Activated CD4-positive, alpha-beta memory T cell treated with anti-CD3 and anti-CD28 coated beads for 36 hours (primary cell): ENCODE measurements at regions of chr11 and their contacts with region 1.

Region 1: GRCh38 chr11:33716236-33716635 is 15.6 kb upstream of the C11orf91 start:
- DNase-seq: no peak
- H3K4me3 Mint-ChIP-seq: no peak overlapping the region
- H3K27ac Mint-ChIP-seq: no peak overlapping the region
- H3K4me1 Mint-ChIP-seq: peaks cover 2% of the 10 kb centered on the region
- H3K27me3 Mint-ChIP-seq: no peaks in the 10 kb centered on the region

Region 2: GRCh38 chr11:33303541-33303940 is 412.7 kb before region 1 on chr11:
- CTCF ChIA-PET with region 1: no interaction called
- POLR2A ChIA-PET with region 1: no interaction called
- intact Hi-C with region 1: no loop called
- DNase-seq: no peak
- H3K4me3 Mint-ChIP-seq: no peak overlapping the region
- H3K27ac Mint-ChIP-seq: no peak overlapping the region
- H3K4me1 Mint-ChIP-seq: peaks cover 28% of the 10 kb centered on the region
- H3K27me3 Mint-ChIP-seq: no peaks in the 10 kb centered on the region

Region 3: GRCh38 chr11:33753304-33753967 is 37.2 kb after region 1 on chr11:
- CTCF ChIA-PET with region 1: interaction called, 13 read pairs
- POLR2A ChIA-PET with region 1: no interaction called
- intact Hi-C with region 1: no loop called
- DNase-seq: peak; percentile 27
- H3K4me3 Mint-ChIP-seq: no peak overlapping the region
- H3K27ac Mint-ChIP-seq: peak overlapping the region; percentile 11
- H3K4me1 Mint-ChIP-seq: peaks cover 11% of the 10 kb centered on the region
- H3K27me3 Mint-ChIP-seq: no peaks in the 10 kb centered on the region

Region 4: DNA sequence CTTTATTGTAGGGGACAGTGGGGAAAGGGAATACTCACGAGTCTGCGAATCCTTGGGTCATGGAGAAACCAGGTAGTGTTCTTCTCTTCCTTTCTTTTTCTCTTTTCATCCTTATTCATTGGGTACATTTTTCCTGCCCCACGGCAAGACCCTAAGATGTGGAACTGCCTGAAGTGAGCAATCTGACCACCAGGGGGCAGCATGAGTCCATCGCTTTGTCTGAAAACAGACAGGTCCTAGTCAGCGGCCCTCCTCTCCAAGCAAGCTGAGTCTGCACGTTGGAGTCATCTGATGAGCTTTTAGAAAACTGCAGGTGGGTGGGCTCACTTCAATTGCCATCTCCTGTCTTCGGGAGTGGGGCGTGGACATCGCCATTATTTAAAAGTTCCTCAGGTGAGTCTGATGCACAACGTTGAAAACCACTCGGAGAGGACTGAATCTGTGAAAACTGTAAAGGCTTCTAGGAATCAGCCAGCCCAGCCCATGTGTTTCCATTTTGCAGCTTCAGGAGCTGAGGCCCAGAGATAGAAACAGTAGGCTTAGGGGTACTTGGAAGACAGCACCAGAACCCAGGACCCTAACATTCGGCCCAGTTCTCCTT is 92.1 kb after region 1 on chr11:
- CTCF ChIA-PET with region 1: interaction called, 16 read pairs
- POLR2A ChIA-PET with region 1: no interaction called
- intact Hi-C with region 1: no loop called
- DNase-seq: peak; percentile 89
- H3K4me3 Mint-ChIP-seq: no peak overlapping the region
- H3K27ac Mint-ChIP-seq: no peak overlapping the region
- H3K4me1 Mint-ChIP-seq: peaks cover 1% of the 10 kb centered on the region
- H3K27me3 Mint-ChIP-seq: peaks cover 6% of the 10 kb centered on the region